Activated CD4-positive, alpha-beta memory T cell treated with anti-CD3 and anti-CD28 coated beads, Interleukin-2, amount 10 ng/mL, durations not matched to agents 7 days and 5 days (primary cell): ENCODE measurements at regions of chr10 and their contacts with region 1.

Region 1: DNA sequence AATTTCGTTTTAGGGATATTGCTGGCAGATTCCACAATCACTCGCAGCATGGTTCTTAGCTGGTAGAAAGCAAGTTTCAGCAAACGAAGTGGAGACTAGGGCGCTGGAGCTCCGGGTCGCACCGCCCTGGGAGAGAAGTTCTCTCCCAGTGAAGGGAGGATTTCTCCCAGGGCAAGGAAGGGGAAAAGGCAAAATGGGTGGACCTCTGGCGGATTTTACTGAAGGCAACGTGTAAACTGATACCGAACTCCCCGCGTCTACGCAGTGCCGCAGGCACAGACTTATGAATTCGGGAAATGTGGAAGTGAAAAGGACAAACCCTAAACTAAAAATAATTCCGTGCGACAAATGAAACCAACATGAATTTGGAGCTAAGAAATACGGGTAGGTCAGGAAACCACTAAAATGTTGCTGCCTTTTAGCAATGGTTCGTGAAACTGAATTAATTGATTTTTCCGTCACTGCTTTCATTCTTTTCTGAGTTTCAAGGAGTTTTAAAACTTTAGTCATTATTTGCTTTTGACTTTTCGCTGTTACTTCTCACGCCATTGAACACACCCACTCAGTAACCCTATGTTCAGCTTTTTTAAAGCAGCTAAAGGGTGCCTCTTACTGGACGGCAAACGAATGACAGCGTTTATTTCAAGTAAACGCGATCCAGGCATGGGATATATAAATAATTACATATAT is at the start of gene MYOF:
- DNase-seq: peak; percentile 67
- H3K4me3 Mint-ChIP-seq: peak within 1 kb of the TSS; percentile 86
- H3K27ac Mint-ChIP-seq: peak within 1 kb of the TSS; percentile 90
- H3K4me1 Mint-ChIP-seq: peaks cover 29% of the 10 kb centered on the region
- H3K27me3 Mint-ChIP-seq: no peaks in the 10 kb centered on the region
- total RNA-seq, gene MYOF: 10.8 to 10.9 TPM

Region 2: DNA sequence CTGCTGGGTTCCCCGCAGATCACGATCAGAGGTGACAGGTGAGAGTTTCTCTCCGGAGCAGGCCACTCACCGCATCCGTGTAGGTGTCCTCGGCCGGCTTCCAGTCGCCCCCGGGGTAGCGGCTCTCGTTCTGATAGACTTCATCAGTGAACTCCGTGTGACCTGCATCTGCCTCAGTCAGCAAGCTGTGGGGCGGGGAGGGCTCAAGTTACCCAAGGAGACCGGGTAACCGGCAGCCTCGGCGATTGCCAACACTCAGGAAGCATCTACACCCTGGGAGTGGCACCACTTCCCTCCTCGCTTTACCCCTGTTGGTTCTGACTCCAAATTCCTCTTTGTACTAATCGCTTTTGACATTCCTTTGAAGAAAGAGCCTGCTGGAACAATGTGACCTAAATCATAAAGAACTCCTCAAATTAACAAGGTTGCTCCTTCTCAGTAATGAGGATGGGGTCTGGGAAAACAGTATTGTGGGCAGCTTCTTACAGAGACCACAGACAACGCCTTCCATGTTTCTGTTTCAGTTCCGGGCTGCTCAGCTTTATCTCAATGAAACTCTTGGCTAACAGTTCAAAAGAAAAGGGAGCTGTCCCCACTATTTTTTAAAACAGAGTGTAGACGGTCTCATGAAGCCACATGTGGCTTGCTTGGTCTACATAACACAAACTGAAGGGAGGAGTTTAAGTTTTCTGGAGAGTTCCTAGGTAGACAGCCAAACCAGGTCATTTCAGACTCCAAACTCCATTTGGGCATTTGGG is 118.2 kb before region 1 on chr10:
- CTCF ChIA-PET with region 1: interaction called, 38 read pairs
- POLR2A ChIA-PET with region 1: no interaction called
- DNase-seq: no peak
- H3K4me3 Mint-ChIP-seq: no peak overlapping the region
- H3K27ac Mint-ChIP-seq: no peak overlapping the region
- H3K4me1 Mint-ChIP-seq: peaks cover 18% of the 10 kb centered on the region
- H3K27me3 Mint-ChIP-seq: no peaks in the 10 kb centered on the region

Region 3: GRCh38 chr10:93413252-93413689 is 69.0 kb before region 1 on chr10:
- CTCF ChIA-PET with region 1: interaction called, 12 read pairs
- POLR2A ChIA-PET with region 1: interaction called, 4 read pairs
- DNase-seq: peak; percentile 64
- H3K4me3 Mint-ChIP-seq: no peak overlapping the region
- H3K27ac Mint-ChIP-seq: peak overlapping the region; percentile 92
- H3K4me1 Mint-ChIP-seq: peaks cover 48% of the 10 kb centered on the region
- H3K27me3 Mint-ChIP-seq: no peaks in the 10 kb centered on the region

Region 4: GRCh38 chr10:93496322-93497041 is 14.2 kb after region 1 on chr10 and contains the start of gene CEP55:
- CTCF ChIA-PET with region 1: interaction called, 35 read pairs
- POLR2A ChIA-PET with region 1: interaction called, 26 read pairs
- DNase-seq: peak; percentile 98
- H3K4me3 Mint-ChIP-seq: peak within 1 kb of the TSS; percentile 93
- H3K27ac Mint-ChIP-seq: peak within 1 kb of the TSS; percentile 94
- H3K4me1 Mint-ChIP-seq: peaks cover 43% of the 10 kb centered on the region
- H3K27me3 Mint-ChIP-seq: no peaks in the 10 kb centered on the region
- total RNA-seq, gene CEP55: 82.5 to 84.6 TPM

Region 5: DNA sequence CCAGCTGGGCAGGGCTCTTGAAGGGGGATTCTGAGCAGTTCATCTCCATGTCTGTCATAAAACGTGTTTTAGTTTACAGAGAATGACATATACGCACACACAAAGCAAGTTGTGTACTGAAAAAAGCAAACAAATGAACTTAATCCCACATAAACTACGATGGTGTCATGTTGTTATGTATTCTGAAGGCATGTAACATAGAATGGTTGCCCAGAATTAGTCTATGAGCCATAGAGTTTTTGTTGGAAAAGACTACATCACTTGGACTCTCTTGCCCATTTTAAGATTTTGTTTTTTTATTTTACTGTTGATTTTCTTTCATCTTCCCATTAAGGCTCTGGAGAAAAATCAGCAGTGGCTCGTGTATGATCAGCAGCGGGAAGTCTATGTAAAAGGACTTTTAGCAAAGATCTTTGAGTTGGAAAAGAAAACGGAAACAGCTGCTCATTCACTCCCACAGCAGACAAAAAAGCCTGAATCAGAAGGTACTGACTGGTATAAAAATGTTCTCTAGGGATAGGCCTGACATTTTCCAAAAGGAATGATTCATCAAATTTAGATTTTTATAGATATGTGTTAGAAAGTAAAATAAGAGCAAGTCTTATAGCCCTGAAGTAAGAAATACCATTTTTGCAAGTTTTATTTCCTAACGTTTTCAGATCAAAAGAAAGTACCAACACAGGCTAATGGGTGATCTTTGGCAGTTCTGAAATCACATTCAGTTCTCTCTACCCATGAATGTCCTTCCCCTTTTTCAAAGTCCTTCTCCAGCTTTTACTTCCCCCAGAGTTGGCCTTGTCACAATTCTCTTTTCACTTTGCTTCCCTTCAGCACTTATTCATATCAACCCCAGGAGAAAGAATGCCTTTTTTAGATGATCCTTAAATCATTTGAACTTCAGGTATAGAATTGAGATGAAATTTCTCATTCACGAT is 33.0 kb after region 1 on chr10:
- CTCF ChIA-PET with region 1: interaction called, 116 read pairs
- POLR2A ChIA-PET with region 1: interaction called, 8 read pairs
- DNase-seq: no peak
- H3K4me3 Mint-ChIP-seq: no peak overlapping the region
- H3K27ac Mint-ChIP-seq: no peak overlapping the region
- H3K4me1 Mint-ChIP-seq: peaks cover 7% of the 10 kb centered on the region
- H3K27me3 Mint-ChIP-seq: no peaks in the 10 kb centered on the region

Region 6: GRCh38 chr10:93600446-93601145 is 118.3 kb after region 1 on chr10:
- CTCF ChIA-PET with region 1: no interaction called
- POLR2A ChIA-PET with region 1: no interaction called
- DNase-seq: no peak
- H3K4me3 Mint-ChIP-seq: no peak overlapping the region
- H3K27ac Mint-ChIP-seq: no peak overlapping the region
- H3K4me1 Mint-ChIP-seq: no peaks in the 10 kb centered on the region
- H3K27me3 Mint-ChIP-seq: peaks cover 51% of the 10 kb centered on the region

Region 7: GRCh38 chr10:93630625-93631557 is 148.6 kb after region 1 on chr10:
- CTCF ChIA-PET with region 1: no interaction called
- POLR2A ChIA-PET with region 1: no interaction called
- DNase-seq: no peak
- H3K4me3 Mint-ChIP-seq: no peak overlapping the region
- H3K27ac Mint-ChIP-seq: no peak overlapping the region
- H3K4me1 Mint-ChIP-seq: no peaks in the 10 kb centered on the region
- H3K27me3 Mint-ChIP-seq: peaks cover 3% of the 10 kb centered on the region